GM18951 (cell line): ENCODE measurements at regions of chr3 and their contacts with region 1.

Region 1: DNA sequence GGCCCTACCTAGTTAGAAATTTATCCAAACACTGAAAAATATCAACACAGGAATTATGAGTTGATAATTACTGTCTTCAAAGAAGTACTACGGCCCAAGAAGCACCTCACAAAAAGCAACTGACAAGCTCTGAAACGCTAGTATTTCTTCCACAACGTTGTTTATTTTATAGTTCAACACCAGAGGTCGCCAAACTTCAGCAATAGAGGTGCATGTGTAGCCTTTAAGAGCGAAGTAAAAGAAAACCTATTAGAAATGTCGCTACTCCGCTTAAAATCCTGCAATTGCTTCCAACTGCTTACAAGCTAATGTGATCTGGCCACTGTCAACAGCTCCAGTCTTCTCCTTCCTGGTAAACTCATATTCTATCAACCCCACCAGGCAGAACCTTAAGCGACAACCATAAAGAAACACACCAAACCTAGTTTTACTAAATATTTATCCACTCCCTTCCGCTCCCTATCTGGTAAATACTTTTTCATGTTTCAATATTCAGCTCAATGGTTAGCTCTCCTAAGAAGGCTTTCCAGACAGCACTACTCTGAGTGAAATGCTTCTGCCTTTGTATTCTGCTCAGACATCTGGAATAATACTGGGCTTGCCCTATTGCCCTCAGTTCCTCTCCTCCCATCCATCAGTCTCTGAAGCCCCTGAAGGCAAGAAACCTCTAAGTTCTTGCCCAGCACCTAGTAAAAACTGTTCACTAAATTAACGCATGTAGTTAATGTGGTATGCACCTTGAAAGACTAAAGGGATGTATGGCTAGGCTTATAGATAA is 110.2 kb downstream of the NR1I2 start:
- POLR2A ChIP-seq: no peak

Region 2: DNA sequence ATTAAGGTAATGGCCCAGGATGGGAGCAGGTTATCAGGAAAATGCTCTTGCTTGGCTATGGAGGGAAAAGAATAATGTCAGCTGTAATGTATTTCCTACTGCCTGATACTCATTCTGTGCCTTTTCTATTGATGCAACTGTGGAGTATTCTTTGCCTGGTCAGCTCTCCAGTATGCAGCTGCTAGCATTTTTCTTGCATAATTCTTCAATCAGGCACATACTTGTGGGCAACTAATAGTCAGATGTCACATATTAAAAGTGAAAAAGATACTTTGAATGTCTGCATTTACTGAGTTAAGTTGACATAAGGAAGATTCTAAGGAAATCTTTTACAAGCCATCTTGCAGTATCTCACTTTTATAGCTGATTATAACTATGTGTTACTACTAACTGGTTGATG is 362.2 kb before region 1 on chr3:
- in situ Hi-C with region 1: no loop called
- POLR2A ChIP-seq: no peak

Region 3: DNA sequence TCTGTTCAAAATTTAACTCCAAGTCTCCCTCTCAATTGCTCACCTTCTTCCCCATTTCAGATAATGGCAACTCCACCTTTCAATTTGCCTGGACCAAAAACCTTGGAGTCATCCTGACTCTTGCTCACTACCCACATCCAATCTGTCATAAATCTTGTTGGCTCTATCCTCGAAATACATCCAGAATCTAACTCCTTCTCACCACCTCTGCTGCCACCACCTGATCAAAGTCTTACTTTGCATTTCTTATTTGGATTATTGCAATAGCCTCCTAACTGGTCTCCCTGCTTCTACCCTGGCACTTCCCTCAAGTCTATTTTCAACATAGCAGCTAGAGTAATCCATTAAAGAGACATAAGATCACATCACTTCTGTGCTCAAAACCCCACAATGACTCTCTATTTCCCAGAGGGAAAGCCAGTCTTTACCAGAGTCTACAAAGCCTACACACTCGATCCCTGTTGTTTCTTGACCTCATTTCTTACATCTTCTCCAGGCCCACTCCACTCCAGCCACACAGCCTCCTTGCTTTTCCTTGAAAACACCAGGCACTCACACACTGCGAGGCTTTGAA is 306.3 kb after region 1 on chr3:
- in situ Hi-C with region 1: loop called (anchors 25 kb)
- POLR2A ChIP-seq: no peak

Region 4: GRCh38 chr3:120417272-120417911 is 525.3 kb after region 1 on chr3:
- in situ Hi-C with region 1: loop called (anchors 25 kb)
- POLR2A ChIP-seq: no peak